T-cell (primary cell): ENCODE measurements at regions of chr19 and their contacts with region 1.

Region 1: DNA sequence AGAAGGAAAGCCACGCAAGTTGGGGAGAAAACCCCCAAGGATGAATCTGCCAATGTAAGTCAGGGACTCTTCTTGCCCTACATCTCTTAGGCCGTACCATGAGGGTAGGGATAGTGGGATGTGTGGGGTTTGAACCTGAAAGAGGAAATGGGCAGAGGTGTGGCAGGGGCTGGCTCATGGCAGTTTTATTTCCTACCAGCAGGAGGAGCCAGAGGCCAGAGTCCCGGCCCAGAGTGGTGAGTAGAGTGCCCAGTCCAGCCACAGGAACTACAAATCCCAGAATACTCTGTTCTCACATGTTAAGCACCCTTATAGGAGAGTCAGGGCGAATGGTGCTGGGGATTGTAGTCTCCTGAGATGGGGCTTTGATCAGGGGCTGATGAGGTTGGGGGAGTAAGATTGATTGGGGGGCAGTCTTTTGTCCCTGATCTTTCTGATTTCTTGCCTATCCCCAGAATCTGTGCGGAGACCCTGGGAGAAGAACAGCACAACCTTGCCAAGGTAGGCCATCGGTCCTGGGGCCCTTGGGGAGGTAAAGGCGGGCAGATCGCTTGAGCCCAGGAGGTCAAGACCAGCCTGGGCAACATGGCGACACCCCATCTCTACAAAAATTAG is 16.5 kb downstream of the VASP start:
- DNase-seq: peak; percentile 49 to 89 (median 71)
- ATAC-seq: peak; percentile 96 to 99 (median 96)
- H3K4me3 ChIP-seq: no peak overlapping the region
- H3K4me3 Mint-ChIP-seq: no peak overlapping the region
- H3K27ac ChIP-seq: no peak overlapping the region
- H3K27ac Mint-ChIP-seq: peak overlapping the region; percentile 64 to 74
- H3K4me1 ChIP-seq: peaks cover 0 to 8% of the 10 kb centered on the region in 2 experiments
- H3K4me1 Mint-ChIP-seq: peaks cover 19 to 21% (median 19%) of the 10 kb centered on the region in 3 donors
- H3K27me3 ChIP-seq: no peaks in the 10 kb centered on the region
- H3K27me3 Mint-ChIP-seq: no peaks in the 10 kb centered on the region

Region 2: GRCh38 chr19:45346449-45346848 is 177.3 kb before region 1 on chr19:
- CTCF ChIA-PET with region 1: no interaction called
- POLR2A ChIA-PET with region 1: no interaction called
- DNase-seq: no peak
- ATAC-seq: no peak
- H3K4me3 ChIP-seq: no peak overlapping the region
- H3K4me3 Mint-ChIP-seq: no peak overlapping the region
- H3K27ac ChIP-seq: no peak overlapping the region
- H3K27ac Mint-ChIP-seq: no peak overlapping the region
- H3K4me1 ChIP-seq: no peaks in the 10 kb centered on the region
- H3K4me1 Mint-ChIP-seq: no peaks in the 10 kb centered on the region
- H3K27me3 ChIP-seq: peaks cover 2 to 62% of the 10 kb centered on the region in 2 experiments
- H3K27me3 Mint-ChIP-seq: peaks cover 13 to 23% of the 10 kb centered on the region in 2 donors

Region 3: GRCh38 chr19:45607071-45608029 is 83.6 kb after region 1 on chr19:
- CTCF ChIA-PET with region 1: interaction called, 3 to 10 read pairs
- POLR2A ChIA-PET with region 1: no interaction called
- DNase-seq: peak in 16 of 35 experiments; percentile 6 to 65 (median 22)
- ATAC-seq: peak; percentile 40 to 49 (median 44)
- H3K4me3 ChIP-seq: no peak overlapping the region
- H3K4me3 Mint-ChIP-seq: peak overlapping the region in 1 of 3 donors; percentile 19
- H3K27ac ChIP-seq: no peak overlapping the region
- H3K27ac Mint-ChIP-seq: no peak overlapping the region
- H3K4me1 ChIP-seq: peaks cover 0 to 10% of the 10 kb centered on the region in 2 experiments
- H3K4me1 Mint-ChIP-seq: peaks cover 4 to 11% (median 6%) of the 10 kb centered on the region in 3 donors
- H3K27me3 ChIP-seq: peaks cover 5 to 29% of the 10 kb centered on the region in 2 experiments
- H3K27me3 Mint-ChIP-seq: peaks cover 9 to 15% of the 10 kb centered on the region in 2 donors